ENCODE measurements at regions of chr4 and their contacts with region 1.

Region 1: GRCh38 chr4:5452156-5452555 is 256.2 kb downstream of the EVC2 start:
- DNase-seq: no peak
- H3K4me3 ChIP-seq: no peak overlapping the region
- H3K27ac ChIP-seq: no peak overlapping the region
- H3K4me1 ChIP-seq: no peaks in the 10 kb centered on the region
- H3K27me3 ChIP-seq: no peaks in the 10 kb centered on the region
- CTCF ChIP-seq: no peak
- EP300 ChIP-seq: no peak
- POLR2A ChIP-seq: no peak

Region 2: GRCh38 chr4:4704267-4704666 is 747.9 kb before region 1 on chr4:
- intact Hi-C with region 1: no loop called
- DNase-seq: no peak
- H3K4me3 ChIP-seq: no peak overlapping the region
- H3K27ac ChIP-seq: no peak overlapping the region
- H3K4me1 ChIP-seq: no peaks in the 10 kb centered on the region
- H3K27me3 ChIP-seq: no peaks in the 10 kb centered on the region
- CTCF ChIP-seq: no peak
- EP300 ChIP-seq: no peak
- POLR2A ChIP-seq: no peak

Region 3: GRCh38 chr4:5050520-5051277 is 401.5 kb before region 1 on chr4:
- intact Hi-C with region 1: loop called (anchors 10 kb)
- DNase-seq: peak; percentile 93
- H3K4me3 ChIP-seq: peak overlapping the region; percentile 62 to 67 (median 65)
- H3K27ac ChIP-seq: peak overlapping the region; percentile 14 to 56 (median 38)
- H3K4me1 ChIP-seq: peaks cover 14 to 26% (median 20%) of the 10 kb centered on the region in 4 donors
- H3K27me3 ChIP-seq: peaks cover 0 to 5% (median 0%) of the 10 kb centered on the region in 4 donors
- CTCF ChIP-seq: peak; percentile 63 to 79 (median 69)
- EP300 ChIP-seq: no peak
- POLR2A ChIP-seq: no peak